ENCODE measurements at regions of chr2 and their contacts with region 1.

Region 1: GRCh38 chr2:84958135-84959044 is 12.6 kb upstream of the KCMF1 start:
- DNase-seq: peak; percentile 96 to 98
- ATAC-seq: peak; percentile 91 to 92
- H3K4me3 ChIP-seq: peak overlapping the region; percentile 21; the same call in 1 of the 3 replicates
- H3K27ac ChIP-seq: peak overlapping the region; percentile 90
- H3K4me1 ChIP-seq: peaks cover 65% of the 10 kb centered on the region
- CTCF ChIP-seq: no peak
- EP300 ChIP-seq: peak; percentile 22 to 82; a peak in 1 of 5 replicates
- POLR2A ChIP-seq: no peak
- RAD21 ChIP-seq: peak in 1 of 2 experiments; percentile 22; a peak in 4 of 5 replicates

Region 2: GRCh38 chr2:84946204-84947009 is 12.0 kb before region 1 on chr2:
- CTCF ChIA-PET with region 1: interaction called, 28 read pairs
- POLR2A ChIA-PET with region 1: interaction called, 30 read pairs
- DNase-seq: peak; percentile 94 to 95
- ATAC-seq: peak; percentile 93 to 94
- H3K4me3 ChIP-seq: no peak overlapping the region
- H3K27ac ChIP-seq: peak overlapping the region; percentile 84 to 88
- H3K4me1 ChIP-seq: peaks cover 26% of the 10 kb centered on the region
- CTCF ChIP-seq: no peak
- EP300 ChIP-seq: no peak
- POLR2A ChIP-seq: peak; percentile 27
- RAD21 ChIP-seq: peak in 1 of 2 experiments; percentile 1; a peak in 1 of 5 replicates